ENCODE measurements at regions of chr6 and their contacts with region 1.

Region 1: GRCh38 chr6:20056350-20056992 is 155.8 kb downstream of the MBOAT1 start:
- DNase-seq: no peak
- H3K4me3 ChIP-seq: no peak overlapping the region
- H3K27ac ChIP-seq: no peak overlapping the region
- H3K4me1 ChIP-seq: no peaks in the 10 kb centered on the region
- H3K27me3 ChIP-seq: no peaks in the 10 kb centered on the region
- CTCF ChIP-seq: peak in 2 of 3 donors; percentile 38 to 49
- EP300 ChIP-seq: no peak
- POLR2A ChIP-seq: no peak

Region 2: DNA sequence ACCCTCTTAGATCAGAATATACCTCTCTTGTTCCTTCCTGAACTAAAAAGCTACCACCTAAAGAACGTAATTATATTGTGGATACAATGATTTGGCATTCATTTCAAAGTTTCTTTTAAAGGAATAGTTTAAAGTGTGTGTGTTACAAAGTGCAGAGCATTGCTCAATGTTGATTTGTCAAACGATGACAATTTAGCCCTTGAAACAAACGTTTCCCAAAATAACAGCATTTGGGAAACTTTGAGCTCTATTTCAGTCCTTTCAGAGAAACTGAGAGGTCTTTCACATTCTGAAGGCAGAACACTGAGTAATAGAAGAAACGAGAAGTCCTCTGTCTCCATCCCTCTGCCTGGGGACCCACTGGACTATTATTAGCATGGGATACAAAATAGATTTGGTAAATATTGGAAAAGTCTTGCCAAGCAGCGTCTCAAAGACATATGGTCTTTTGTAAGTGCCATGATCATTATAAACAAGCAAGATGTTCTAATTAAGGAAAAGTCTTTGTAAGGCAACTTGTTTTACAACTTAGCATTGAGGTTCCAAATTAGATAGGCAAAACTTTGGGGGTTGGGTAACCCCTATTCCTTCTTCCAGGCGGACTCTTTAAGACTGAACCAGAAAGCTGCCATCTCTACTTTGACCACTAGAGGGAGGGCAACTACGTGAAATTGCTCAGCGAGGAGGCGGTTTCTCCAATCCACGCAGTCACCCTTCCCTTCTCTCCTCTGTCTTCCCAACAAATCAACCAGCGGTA is 1460.5 kb before region 1 on chr6:
- intact Hi-C with region 1: loop called in 3 of 4 experiments (anchors 5 to 10 kb)
- DNase-seq: peak in 4 of 5 donors; percentile 20 to 71 (median 44)
- H3K4me3 ChIP-seq: no peak overlapping the region
- H3K27ac ChIP-seq: no peak overlapping the region
- H3K4me1 ChIP-seq: no peaks in the 10 kb centered on the region
- H3K27me3 ChIP-seq: no peaks in the 10 kb centered on the region
- CTCF ChIP-seq: peak; percentile 65 to 79 (median 66)
- EP300 ChIP-seq: no peak
- POLR2A ChIP-seq: no peak

Measured in ovary (tissue), 10 donors.